Posterior cingulate gyrus (tissue), 11 donors: ENCODE measurements at regions of chr13 and their contacts with region 1.

Region 1: DNA sequence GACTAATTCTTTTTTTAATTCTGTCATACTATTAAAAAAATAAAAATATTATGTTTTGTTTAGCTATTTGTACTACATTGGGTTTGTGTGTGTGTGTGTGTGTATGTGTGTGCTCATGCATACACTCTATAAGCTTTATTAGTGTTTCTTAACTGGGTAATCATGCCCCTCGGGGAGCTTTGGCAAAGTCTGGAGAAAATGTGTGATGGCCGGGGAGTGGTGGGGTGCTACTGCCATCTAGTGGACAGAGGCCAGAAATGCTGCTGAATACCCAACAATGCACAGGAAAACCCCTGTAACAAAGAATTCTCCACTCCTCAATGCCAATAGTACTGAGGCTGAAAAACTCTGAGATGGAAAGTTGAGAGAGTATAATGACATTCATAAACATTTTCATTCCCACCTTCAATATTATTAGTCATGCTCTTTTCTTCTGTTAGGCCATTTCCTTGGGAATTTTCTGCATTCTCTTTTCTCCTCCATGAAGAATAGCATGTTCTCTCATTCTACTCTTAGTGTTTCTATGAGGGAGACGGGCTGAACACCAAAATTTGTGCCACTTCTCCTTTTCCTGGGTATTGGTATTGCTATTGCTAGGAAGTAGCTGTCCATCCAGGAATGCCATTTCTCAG is 157.3 kb downstream of the DNAJC3 start:
- DNase-seq: peak in 9 of 10 donors; percentile 32 to 92 (median 67)

Region 2: DNA sequence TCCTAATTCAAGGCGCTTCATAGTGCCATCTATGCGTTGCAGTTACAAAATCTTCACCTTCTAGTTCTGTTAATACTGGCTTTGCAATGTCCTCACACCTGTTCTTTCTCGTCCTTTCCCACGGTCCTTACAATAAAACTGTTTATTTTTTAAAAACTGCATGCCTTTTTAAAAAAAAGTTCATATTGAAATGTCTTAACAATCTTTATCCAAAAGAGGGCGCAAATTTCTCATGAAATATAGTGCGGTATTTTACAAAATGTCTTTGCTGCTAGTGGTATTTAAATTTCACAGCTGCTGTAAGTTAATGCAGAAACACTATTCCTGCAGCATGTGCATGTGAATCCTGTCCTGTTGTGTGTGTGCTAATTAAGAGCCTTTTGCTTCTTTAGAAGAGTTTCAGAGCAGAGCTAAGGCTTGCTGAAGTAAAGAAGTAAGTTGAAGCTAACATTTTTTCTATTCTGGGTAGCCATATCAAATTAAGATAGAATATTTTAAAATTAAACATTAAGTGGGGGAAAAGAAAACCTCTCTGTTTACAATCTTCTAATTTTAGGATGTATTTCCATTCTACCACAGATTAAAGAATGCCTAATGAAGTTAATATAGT is 297.5 kb before region 1 on chr13:
- intact Hi-C with region 1: loop called (anchors 2 kb)
- DNase-seq: no peak

Region 3: GRCh38 chr13:95624020-95624419 is 210.2 kb before region 1 on chr13:
- intact Hi-C with region 1: loop called (anchors 1 kb)
- DNase-seq: peak in 2 of 10 donors; percentile 13 to 37